CD4-positive, alpha-beta memory T cell (primary cell): ENCODE measurements at regions of chr4 and their contacts with region 1.

Region 1: DNA sequence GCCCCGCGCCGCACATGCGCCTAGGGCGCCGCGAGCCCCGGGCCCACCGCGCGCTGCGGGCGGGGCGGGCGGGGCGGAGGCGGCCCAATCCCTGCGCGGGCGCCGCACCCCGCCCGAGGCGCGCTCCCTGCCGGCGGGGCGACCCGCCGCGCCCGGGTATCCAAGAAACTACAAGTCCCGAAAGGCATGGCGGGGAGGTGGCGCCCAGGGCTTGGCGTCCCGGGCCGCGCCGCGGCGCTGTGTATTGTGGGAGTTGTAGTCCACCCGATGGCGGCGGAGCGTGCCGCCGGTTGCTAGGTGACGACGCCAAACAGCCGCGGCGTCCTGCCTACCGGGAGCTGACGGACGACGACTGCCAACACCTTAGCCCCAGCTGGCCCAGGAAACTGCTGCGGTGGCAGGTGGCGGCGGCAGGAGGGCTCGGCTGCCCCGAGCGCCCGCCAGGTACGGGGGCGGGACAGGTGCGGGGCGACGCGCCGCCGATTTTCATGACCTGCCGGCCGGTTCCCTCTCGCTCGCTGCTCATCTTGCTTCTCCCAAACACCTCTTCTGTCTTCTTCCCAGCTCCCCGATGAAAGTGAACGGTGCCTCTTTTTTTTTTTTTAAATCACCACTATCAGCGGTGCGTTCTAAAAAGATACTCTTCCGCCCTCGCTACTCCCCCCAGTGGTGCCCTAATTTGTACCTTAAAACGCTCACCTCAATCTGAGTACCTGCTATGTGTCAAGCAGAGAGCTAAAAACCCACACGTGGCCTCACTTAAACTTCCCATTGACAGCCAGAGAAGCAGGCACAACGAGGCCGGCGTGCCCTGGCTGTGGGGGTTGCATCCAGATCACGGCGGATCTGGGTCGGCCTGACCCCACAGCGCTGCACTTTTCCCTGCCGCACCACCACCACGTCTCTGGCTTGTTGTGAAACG is at the start of gene CFAP99:
- DNase-seq: peak; percentile 96 to 99 (median 97)
- H3K4me3 ChIP-seq: peak within 1 kb of the TSS; percentile 44 to 72
- H3K4me3 Mint-ChIP-seq: peak within 1 kb of the TSS; percentile 89 to 95 (median 92)
- H3K27ac ChIP-seq: peak within 1 kb of the TSS; percentile 78
- H3K27ac Mint-ChIP-seq: peak within 1 kb of the TSS; percentile 92 to 100 (median 98)
- H3K4me1 ChIP-seq: peaks cover 39% of the 10 kb centered on the region
- H3K4me1 Mint-ChIP-seq: peaks cover 29 to 48% (median 36%) of the 10 kb centered on the region in 4 donors
- H3K27me3 ChIP-seq: no peaks in the 10 kb centered on the region
- H3K27me3 Mint-ChIP-seq: no peaks in the 10 kb centered on the region
- total RNA-seq, gene CFAP99: 0.12 to 0.19 TPM

Region 2: DNA sequence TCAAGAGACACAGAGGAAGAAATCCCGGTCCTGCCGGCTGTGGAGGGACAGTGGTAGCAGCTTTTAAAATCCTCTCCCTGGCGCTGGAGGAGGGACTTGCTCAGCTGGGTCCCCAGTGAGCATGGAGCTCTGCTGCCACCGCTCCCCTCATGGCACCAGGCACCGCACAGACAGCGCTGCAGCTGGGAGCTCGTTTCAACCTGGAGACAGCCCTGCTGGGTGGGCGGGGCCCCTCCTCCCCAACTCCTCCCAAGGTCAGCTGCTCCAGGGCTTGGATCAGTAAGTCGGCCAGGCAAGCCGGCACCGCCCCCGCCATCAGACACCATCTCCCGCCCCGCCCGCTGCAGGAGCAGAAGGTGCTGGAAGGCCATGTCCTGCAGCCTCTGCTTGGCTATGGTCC is 16.9 kb before region 1 on chr4:
- CTCF ChIA-PET with region 1: interaction called, 29 read pairs
- POLR2A ChIA-PET with region 1: interaction called, 53 read pairs
- intact Hi-C with region 1: no loop called
- DNase-seq: no peak
- H3K4me3 ChIP-seq: peak overlapping the region in 1 of 2 donors; percentile 16
- H3K4me3 Mint-ChIP-seq: peak overlapping the region; percentile 69 to 89 (median 77)
- H3K27ac ChIP-seq: no peak overlapping the region
- H3K27ac Mint-ChIP-seq: peak overlapping the region in 6 of 7 donors; percentile 29 to 86 (median 56)
- H3K4me1 ChIP-seq: peaks cover 35% of the 10 kb centered on the region
- H3K4me1 Mint-ChIP-seq: peaks cover 39 to 58% (median 52%) of the 10 kb centered on the region in 4 donors
- H3K27me3 ChIP-seq: no peaks in the 10 kb centered on the region
- H3K27me3 Mint-ChIP-seq: no peaks in the 10 kb centered on the region

Region 3: GRCh38 chr4:2536193-2537010 is 117.5 kb after region 1 on chr4 and contains the start of gene FAM193A:
- CTCF ChIA-PET with region 1: interaction called, 5 read pairs
- POLR2A ChIA-PET with region 1: interaction called, 3 read pairs
- intact Hi-C with region 1: loop called (anchors 1 kb)
- DNase-seq: peak; percentile 98 to 99 (median 99)
- H3K4me3 ChIP-seq: peak within 1 kb of the TSS; percentile 52 to 70
- H3K4me3 Mint-ChIP-seq: peak within 1 kb of the TSS; percentile 88 to 95 (median 92)
- H3K27ac ChIP-seq: peak within 1 kb of the TSS; percentile 83
- H3K27ac Mint-ChIP-seq: peak within 1 kb of the TSS; percentile 92 to 97 (median 94)
- H3K4me1 ChIP-seq: peaks cover 37% of the 10 kb centered on the region
- H3K4me1 Mint-ChIP-seq: peaks cover 10 to 44% (median 16%) of the 10 kb centered on the region in 4 donors
- H3K27me3 ChIP-seq: no peaks in the 10 kb centered on the region
- H3K27me3 Mint-ChIP-seq: no peaks in the 10 kb centered on the region
- total RNA-seq, gene FAM193A: 47.8 TPM

Region 4: GRCh38 chr4:2552806-2553205 is 133.9 kb after region 1 on chr4:
- CTCF ChIA-PET with region 1: no interaction called
- POLR2A ChIA-PET with region 1: no interaction called
- intact Hi-C with region 1: no loop called
- DNase-seq: no peak
- H3K4me3 ChIP-seq: no peak overlapping the region
- H3K4me3 Mint-ChIP-seq: no peak overlapping the region
- H3K27ac ChIP-seq: no peak overlapping the region
- H3K27ac Mint-ChIP-seq: no peak overlapping the region
- H3K4me1 ChIP-seq: peaks cover 30% of the 10 kb centered on the region
- H3K4me1 Mint-ChIP-seq: peaks cover 14 to 62% (median 28%) of the 10 kb centered on the region in 4 donors
- H3K27me3 ChIP-seq: no peaks in the 10 kb centered on the region
- H3K27me3 Mint-ChIP-seq: no peaks in the 10 kb centered on the region